T-cell (primary cell): ENCODE measurements at regions of chr22 and their contacts with region 1.

Region 1: DNA sequence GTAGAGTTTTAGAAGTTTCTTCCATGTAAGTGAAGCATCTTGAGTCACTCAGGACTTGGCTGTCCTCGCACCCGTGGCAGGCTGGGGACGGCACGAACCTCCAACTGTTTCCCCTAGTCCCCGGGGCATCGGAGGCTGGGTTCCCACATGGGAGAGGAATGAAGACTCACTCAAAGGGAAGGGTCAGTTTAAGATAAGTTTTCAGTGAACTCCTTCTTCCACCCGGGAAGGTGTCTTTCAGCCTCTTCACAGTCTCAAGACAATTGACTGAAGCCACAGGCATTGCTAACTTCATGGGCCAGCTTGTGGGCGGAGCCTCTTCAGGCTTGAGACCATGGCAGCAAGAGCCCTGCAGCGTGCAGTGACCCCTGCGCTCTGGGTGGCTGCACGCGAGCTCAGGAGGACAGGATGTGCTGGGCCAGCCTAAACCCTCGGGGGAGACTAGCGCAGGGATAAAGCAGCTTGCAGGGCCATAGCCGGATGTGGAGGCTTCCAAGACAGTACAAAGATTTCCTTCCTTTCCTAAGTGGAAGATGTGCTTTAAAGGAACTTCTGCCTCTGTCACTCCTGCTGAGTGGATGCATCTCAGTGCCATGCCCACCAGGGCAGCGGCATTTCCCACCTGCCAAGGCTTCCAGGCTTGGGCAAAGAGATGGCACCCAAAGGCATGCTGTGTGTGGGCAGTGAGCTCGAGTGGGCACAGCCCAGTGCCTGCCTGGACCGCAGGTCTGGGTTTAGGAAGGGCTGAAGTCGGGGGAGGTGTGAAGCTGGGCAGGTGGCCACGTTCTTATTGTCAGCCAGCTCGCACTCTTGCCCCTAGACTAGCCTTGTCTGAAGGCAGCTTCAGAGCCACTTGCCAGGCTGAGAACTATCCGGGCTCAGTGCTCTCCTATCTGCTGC is 32.9 kb downstream of the PPIL2 start:
- DNase-seq: no peak
- ATAC-seq: no peak
- H3K4me3 ChIP-seq: no peak overlapping the region
- H3K4me3 Mint-ChIP-seq: no peak overlapping the region
- H3K27ac ChIP-seq: no peak overlapping the region
- H3K27ac Mint-ChIP-seq: no peak overlapping the region
- H3K4me1 ChIP-seq: no peaks in the 10 kb centered on the region
- H3K4me1 Mint-ChIP-seq: no peaks in the 10 kb centered on the region
- H3K27me3 ChIP-seq: no peaks in the 10 kb centered on the region
- H3K27me3 Mint-ChIP-seq: no peaks in the 10 kb centered on the region

Region 2: GRCh38 chr22:21568347-21569075 is 130.2 kb before region 1 on chr22:
- CTCF ChIA-PET with region 1: no interaction called
- POLR2A ChIA-PET with region 1: interaction called in 1 of 2 experiments, 15 read pairs
- DNase-seq: peak in 13 of 35 experiments; percentile 2 to 33 (median 15)
- ATAC-seq: peak; percentile 27 to 40 (median 38)
- H3K4me3 ChIP-seq: peak overlapping the region; percentile 65 to 87
- H3K4me3 Mint-ChIP-seq: peak overlapping the region; percentile 84 to 87 (median 86)
- H3K27ac ChIP-seq: peak overlapping the region; percentile 79
- H3K27ac Mint-ChIP-seq: peak overlapping the region; percentile 84 to 88
- H3K4me1 ChIP-seq: peaks cover 33 to 51% of the 10 kb centered on the region in 2 experiments
- H3K4me1 Mint-ChIP-seq: peaks cover 51 to 62% (median 53%) of the 10 kb centered on the region in 3 donors
- H3K27me3 ChIP-seq: peaks cover 0 to 2% of the 10 kb centered on the region in 2 experiments
- H3K27me3 Mint-ChIP-seq: no peaks in the 10 kb centered on the region

Region 3: DNA sequence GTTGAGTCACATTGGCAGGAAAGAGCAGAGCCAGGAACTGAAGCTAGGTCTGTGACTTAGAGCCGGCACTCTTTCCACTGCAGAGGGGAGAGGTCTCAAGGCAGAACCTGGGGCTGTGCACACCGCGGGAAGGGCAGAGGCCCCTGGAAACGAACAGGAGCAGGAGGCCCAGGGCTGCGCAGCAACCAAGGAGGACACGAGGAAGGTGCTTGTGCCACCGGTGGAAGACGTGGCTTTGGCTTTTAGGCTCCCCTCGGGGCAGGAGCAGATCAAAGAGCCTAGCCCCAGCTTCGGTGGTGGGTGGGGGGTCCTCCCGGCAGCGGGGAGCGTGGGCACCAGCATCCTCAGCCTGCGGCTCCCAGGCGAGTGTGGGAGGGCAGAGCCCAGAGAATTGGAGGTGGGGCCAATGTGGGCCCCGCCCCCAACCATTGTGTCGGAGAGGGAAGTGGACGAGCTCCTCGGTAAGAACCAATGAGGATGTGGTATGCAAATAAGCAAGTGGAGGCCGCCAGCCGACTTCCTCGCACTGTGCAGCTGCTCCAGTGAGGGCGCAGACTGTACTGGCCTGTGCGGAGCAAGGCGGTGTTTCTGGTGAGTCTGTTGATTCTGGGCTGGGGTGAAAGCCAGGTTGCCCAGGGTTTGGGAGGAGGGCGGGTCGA is 66.3 kb before region 1 on chr22 and contains the start of gene CCDC116:
- CTCF ChIA-PET with region 1: no interaction called
- POLR2A ChIA-PET with region 1: no interaction called
- DNase-seq: peak; percentile 26 to 79 (median 56)
- ATAC-seq: peak; percentile 4 to 28 (median 11)
- H3K4me3 ChIP-seq: no peak within 1 kb of the TSS
- H3K4me3 Mint-ChIP-seq: peak within 1 kb of the TSS in 1 of 3 donors; percentile 6
- H3K27ac ChIP-seq: no peak within 1 kb of the TSS
- H3K27ac Mint-ChIP-seq: peak within 1 kb of the TSS in 1 of 2 donors; percentile 61
- H3K4me1 ChIP-seq: peaks cover 7 to 36% of the 10 kb centered on the region in 2 experiments
- H3K4me1 Mint-ChIP-seq: peaks cover 18 to 29% (median 20%) of the 10 kb centered on the region in 3 donors
- H3K27me3 ChIP-seq: peaks cover 0 to 4% of the 10 kb centered on the region in 2 experiments
- H3K27me3 Mint-ChIP-seq: no peaks in the 10 kb centered on the region
- total RNA-seq, gene CCDC116: 0.16 to 0.79 (median 0.66) TPM in 4 of 5 donors, not detected in the other

Region 4: GRCh38 chr22:21712894-21713712 is 14.4 kb after region 1 on chr22:
- CTCF ChIA-PET with region 1: no interaction called
- POLR2A ChIA-PET with region 1: no interaction called
- DNase-seq: peak; percentile 6 to 78 (median 47)
- ATAC-seq: peak; percentile 78 to 95 (median 86)
- H3K4me3 ChIP-seq: no peak overlapping the region
- H3K4me3 Mint-ChIP-seq: peak overlapping the region in 1 of 3 donors; percentile 26
- H3K27ac ChIP-seq: no peak overlapping the region
- H3K27ac Mint-ChIP-seq: no peak overlapping the region
- H3K4me1 ChIP-seq: peaks cover 0 to 4% of the 10 kb centered on the region in 2 experiments
- H3K4me1 Mint-ChIP-seq: peaks cover 7 to 8% (median 7%) of the 10 kb centered on the region in 3 donors
- H3K27me3 ChIP-seq: no peaks in the 10 kb centered on the region
- H3K27me3 Mint-ChIP-seq: no peaks in the 10 kb centered on the region

Region 5: GRCh38 chr22:21741806-21742205 is 43.1 kb after region 1 on chr22:
- CTCF ChIA-PET with region 1: no interaction called
- POLR2A ChIA-PET with region 1: no interaction called
- DNase-seq: no peak
- ATAC-seq: no peak
- H3K4me3 ChIP-seq: no peak overlapping the region
- H3K4me3 Mint-ChIP-seq: no peak overlapping the region
- H3K27ac ChIP-seq: no peak overlapping the region
- H3K27ac Mint-ChIP-seq: no peak overlapping the region
- H3K4me1 ChIP-seq: no peaks in the 10 kb centered on the region
- H3K4me1 Mint-ChIP-seq: peaks cover 0 to 13% (median 0%) of the 10 kb centered on the region in 3 donors
- H3K27me3 ChIP-seq: no peaks in the 10 kb centered on the region
- H3K27me3 Mint-ChIP-seq: no peaks in the 10 kb centered on the region